Activated naive CD4-positive, alpha-beta T cell treated with anti-CD3 and anti-CD28 coated beads for 36 hours (primary cell): ENCODE measurements at regions of chr1 and their contacts with region 1.

Region 1: GRCh38 chr1:112390775-112391602 is 5.0 kb upstream of the CTTNBP2NL start:
- DNase-seq: peak; percentile 90
- H3K4me3 Mint-ChIP-seq: peak overlapping the region; percentile 45
- H3K27ac Mint-ChIP-seq: no peak overlapping the region
- H3K4me1 Mint-ChIP-seq: peaks cover 18% of the 10 kb centered on the region
- H3K27me3 Mint-ChIP-seq: peaks cover 14% of the 10 kb centered on the region

Region 2: DNA sequence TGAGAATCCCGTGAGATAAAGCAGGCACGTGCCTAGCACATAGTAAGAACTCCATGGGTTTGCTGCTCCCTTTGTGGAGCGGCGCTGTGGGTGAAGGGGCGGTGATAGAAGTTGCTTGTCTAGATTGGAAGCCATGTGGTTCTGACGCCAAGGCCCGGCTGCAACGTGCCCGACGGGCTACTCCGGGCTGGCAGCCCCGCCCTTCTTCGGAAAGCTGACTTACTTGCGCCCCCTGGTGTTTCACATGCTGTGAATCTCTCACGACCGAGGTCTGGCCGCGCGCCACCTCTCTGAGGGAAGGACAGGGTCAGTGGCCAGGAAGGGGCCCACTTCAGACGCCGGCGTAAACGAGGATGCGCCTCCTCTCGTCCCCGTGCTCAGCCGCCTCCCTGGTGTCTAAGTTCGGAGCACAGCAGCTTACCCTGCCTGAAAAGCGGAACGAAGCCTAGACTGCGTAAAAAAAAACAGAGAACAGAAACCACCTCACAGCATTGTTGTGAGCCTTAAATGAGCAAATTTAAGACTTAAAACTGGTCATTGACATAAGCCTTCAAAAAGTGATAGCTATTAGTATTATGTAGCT is 75.2 kb after region 1 on chr1:
- CTCF ChIA-PET with region 1: interaction called, 116 read pairs
- intact Hi-C with region 1: loop called (anchors 1 kb)
- DNase-seq: peak; percentile 92
- H3K4me3 Mint-ChIP-seq: peak overlapping the region; percentile 73
- H3K27ac Mint-ChIP-seq: no peak overlapping the region
- H3K4me1 Mint-ChIP-seq: peaks cover 9% of the 10 kb centered on the region
- H3K27me3 Mint-ChIP-seq: peaks cover 5% of the 10 kb centered on the region

Region 3: GRCh38 chr1:112501810-112502641 is 111.0 kb after region 1 on chr1:
- CTCF ChIA-PET with region 1: interaction called, 5 read pairs
- intact Hi-C with region 1: loop called (anchors 1 kb)
- DNase-seq: peak; percentile 73
- H3K4me3 Mint-ChIP-seq: peak overlapping the region; percentile 60
- H3K27ac Mint-ChIP-seq: no peak overlapping the region
- H3K4me1 Mint-ChIP-seq: peaks cover 3% of the 10 kb centered on the region
- H3K27me3 Mint-ChIP-seq: peaks cover 58% of the 10 kb centered on the region

Region 4: DNA sequence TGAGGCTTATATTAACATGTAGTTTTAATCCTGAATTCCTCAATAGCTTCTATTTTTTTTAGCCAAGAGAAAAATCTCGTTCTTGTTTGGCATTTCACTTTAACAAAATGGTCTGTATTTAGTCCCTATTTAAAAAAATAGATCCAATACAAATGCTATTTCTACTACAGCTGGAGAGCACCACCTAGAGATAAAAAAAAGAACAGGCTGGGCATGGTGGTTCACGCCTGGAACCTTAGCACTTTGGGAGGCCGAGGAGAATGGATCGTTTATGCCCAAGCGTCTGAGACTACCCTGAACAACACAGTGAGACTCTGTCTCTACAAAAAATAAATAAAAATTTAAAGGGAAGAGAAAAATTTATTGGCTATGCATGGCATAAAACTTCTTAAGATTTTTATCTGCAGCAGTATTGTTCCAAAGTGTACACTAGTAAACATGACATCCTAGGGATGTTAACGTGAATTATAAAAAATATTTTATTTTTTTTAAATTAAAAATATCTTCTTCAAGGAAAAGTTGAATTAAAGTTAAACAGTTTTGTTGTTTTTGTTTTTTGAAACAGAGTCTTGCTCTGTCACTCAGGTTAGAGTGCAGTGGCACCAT is 223.6 kb after region 1 on chr1:
- CTCF ChIA-PET with region 1: interaction called, 19 read pairs
- intact Hi-C with region 1: loop called (anchors 1 kb)
- DNase-seq: peak; percentile 25
- H3K4me3 Mint-ChIP-seq: no peak overlapping the region
- H3K27ac Mint-ChIP-seq: no peak overlapping the region
- H3K4me1 Mint-ChIP-seq: peaks cover 15% of the 10 kb centered on the region
- H3K27me3 Mint-ChIP-seq: no peaks in the 10 kb centered on the region

Region 5: DNA sequence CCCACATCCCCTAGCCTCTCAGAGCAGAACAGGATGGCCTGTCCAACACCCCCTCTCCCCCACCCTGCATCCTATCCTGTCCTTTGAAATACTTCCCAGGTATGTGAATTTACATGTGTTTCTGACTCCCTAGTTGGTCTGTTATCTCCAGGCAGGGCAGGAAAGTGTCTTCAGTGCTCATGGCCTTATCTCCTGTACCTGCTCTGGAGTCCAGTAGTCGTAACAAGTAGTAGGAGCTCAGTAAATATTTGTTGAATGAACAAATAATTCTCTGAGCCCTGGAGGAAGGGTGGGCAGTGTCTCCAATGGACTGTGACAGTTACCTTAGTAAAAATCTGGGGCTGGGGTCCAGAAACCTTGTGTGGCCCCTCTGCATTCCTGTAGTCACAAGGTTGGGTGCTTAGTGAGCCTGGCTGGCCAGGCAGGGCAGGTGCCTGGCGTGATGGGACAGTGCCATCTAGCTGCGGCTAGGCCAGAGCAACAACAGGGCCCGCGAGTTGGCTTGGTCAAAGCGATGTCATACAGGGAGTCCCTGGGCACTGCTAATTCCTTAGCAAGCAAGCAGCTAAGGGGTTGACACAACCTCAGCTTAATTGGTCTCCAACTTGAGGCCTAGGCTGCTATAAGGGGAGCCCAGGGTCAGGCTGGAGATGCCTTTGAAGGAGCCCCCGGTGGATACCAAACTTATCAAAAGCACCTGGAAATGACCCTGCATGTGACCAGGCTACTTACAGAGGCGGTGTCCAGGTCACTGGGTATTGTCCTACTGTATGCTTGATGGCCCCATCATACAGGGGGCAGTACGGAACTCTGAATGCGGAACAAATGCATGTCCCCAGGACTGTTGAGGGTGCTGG is 413.1 kb after region 1 on chr1:
- CTCF ChIA-PET with region 1: interaction called, 6 read pairs
- intact Hi-C with region 1: loop called (anchors 1 kb)
- DNase-seq: peak; percentile 81
- H3K4me3 Mint-ChIP-seq: no peak overlapping the region
- H3K27ac Mint-ChIP-seq: no peak overlapping the region
- H3K4me1 Mint-ChIP-seq: no peaks in the 10 kb centered on the region
- H3K27me3 Mint-ChIP-seq: no peaks in the 10 kb centered on the region